A549 (cell line): ENCODE measurements at regions of chr12 and their contacts with region 1.

Region 1: GRCh38 chr12:52147367-52147972 is 44.3 kb downstream of the KRT80 start:
- DNase-seq: peak; percentile 96 to 100
- ATAC-seq: peak; percentile 46 to 71
- H3K4me3 ChIP-seq: no peak overlapping the region
- H3K27ac ChIP-seq: peak overlapping the region; percentile 100
- H3K4me1 ChIP-seq: peaks cover 93% of the 10 kb centered on the region
- CTCF ChIP-seq: no peak
- EP300 ChIP-seq: peak; percentile 97 to 99
- POLR2A ChIP-seq: no peak
- RAD21 ChIP-seq: peak in 1 of 2 experiments; percentile 42; a peak in 3 of 5 replicates

Region 2: DNA sequence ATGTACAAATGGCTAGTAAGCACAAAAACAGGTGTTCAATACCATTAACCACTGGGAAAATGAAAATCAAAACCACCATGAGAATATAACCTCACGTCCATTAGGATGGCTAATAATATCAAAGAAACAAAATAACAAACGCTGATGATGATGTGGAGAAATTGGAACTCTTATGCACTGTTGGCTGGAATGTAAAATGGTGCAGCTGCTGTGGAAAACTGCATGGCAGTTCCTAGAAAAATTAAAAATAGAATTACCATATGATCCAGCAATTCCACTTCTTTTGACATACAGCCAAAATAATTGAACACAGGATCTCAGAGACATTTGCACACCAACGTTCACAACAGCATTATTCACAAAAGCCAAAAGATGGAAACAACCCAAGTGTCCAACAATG is 1253.2 kb before region 1 on chr12:
- CTCF ChIA-PET with region 1: no interaction called
- POLR2A ChIA-PET with region 1: no interaction called
- DNase-seq: no peak
- ATAC-seq: no peak
- H3K4me3 ChIP-seq: no peak overlapping the region
- H3K27ac ChIP-seq: no peak overlapping the region
- H3K4me1 ChIP-seq: no peaks in the 10 kb centered on the region
- CTCF ChIP-seq: no peak
- EP300 ChIP-seq: no peak
- POLR2A ChIP-seq: no peak
- RAD21 ChIP-seq: no peak

Region 3: DNA sequence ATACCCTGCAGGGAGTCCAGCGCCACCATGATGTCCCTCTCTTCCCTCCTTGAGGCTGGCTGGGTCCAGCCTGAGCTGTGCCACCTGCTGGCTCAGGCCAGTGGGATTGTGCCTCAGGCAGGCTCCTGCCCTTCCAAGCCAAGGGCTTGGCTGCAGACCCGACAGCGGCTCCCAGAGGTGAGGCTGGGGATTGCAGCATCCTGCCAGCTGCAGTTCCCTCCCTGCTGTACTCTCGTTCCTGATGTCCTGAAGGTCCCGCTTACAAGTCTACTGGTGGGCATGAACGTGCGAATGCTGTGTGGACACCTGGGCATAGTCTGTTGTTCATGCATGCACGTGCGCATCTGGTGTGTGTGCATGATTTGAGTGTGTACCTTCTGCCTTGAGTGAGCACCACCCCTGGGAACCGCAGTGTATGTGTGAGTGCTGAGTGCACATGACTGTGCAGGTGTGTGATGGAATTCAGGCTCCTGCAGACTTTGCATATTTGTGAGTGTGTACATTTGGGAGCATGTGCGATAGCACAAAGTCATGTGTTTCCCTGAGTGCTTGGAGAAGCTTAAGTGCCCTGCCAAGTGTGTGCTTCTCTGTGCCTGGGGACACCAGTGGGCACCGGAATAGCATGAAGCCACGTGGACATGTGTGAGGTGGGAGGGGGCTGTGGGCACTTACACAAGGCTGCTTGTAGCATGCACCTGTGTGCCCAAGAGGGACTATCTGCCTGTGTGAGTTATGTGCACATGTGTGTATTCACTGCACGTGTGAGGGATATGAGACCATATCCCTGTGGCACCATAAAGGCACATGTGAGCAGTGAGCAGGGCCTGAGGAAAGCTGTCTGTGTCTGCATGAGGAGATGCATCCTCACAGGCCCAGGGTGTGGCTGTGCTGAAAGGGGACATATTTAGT is 66.3 kb after region 1 on chr12:
- CTCF ChIA-PET with region 1: interaction called, 14 read pairs
- POLR2A ChIA-PET with region 1: interaction called, 4 read pairs
- DNase-seq: peak; percentile 88 to 91
- ATAC-seq: peak; percentile 74 to 84
- H3K4me3 ChIP-seq: no peak overlapping the region
- H3K27ac ChIP-seq: peak overlapping the region; percentile 89 to 96
- H3K4me1 ChIP-seq: peaks cover 76% of the 10 kb centered on the region
- CTCF ChIP-seq: peak; percentile 97
- EP300 ChIP-seq: no peak
- POLR2A ChIP-seq: no peak
- RAD21 ChIP-seq: peak; percentile 97 to 98

Region 4: GRCh38 chr12:52243856-52244614 is 96.6 kb after region 1 on chr12:
- CTCF ChIA-PET with region 1: interaction called, 22 read pairs
- POLR2A ChIA-PET with region 1: interaction called, 29 read pairs
- DNase-seq: peak; percentile 92 to 93
- ATAC-seq: peak; percentile 22 to 31
- H3K4me3 ChIP-seq: peak overlapping the region; percentile 24; the same call in 1 of the 3 replicates
- H3K27ac ChIP-seq: peak overlapping the region; percentile 92 to 97
- H3K4me1 ChIP-seq: peaks cover 100% of the 10 kb centered on the region
- CTCF ChIP-seq: no peak
- EP300 ChIP-seq: peak; percentile 55 to 80; a peak in 3 of 5 replicates
- POLR2A ChIP-seq: no peak
- RAD21 ChIP-seq: no peak; a peak in 2 of 5 replicates

Region 5: GRCh38 chr12:52285172-52285745 is 137.8 kb after region 1 on chr12:
- CTCF ChIA-PET with region 1: interaction called, 35 read pairs
- POLR2A ChIA-PET with region 1: interaction called, 75 read pairs
- DNase-seq: peak; percentile 58 to 84
- ATAC-seq: no peak
- H3K4me3 ChIP-seq: peak overlapping the region; percentile 59
- H3K27ac ChIP-seq: peak overlapping the region; percentile 96 to 100
- H3K4me1 ChIP-seq: peaks cover 57% of the 10 kb centered on the region
- CTCF ChIP-seq: no peak
- EP300 ChIP-seq: peak; percentile 90 to 96; a peak in 4 of 5 replicates
- POLR2A ChIP-seq: peak; percentile 80
- RAD21 ChIP-seq: peak in 1 of 2 experiments; percentile 15; a peak in 1 of 5 replicates

Region 6: GRCh38 chr12:52582971-52583456 is 435.5 kb after region 1 on chr12:
- CTCF ChIA-PET with region 1: interaction called, 13 read pairs
- POLR2A ChIA-PET with region 1: no interaction called
- DNase-seq: peak; percentile 74 to 88
- ATAC-seq: peak; percentile 87 to 96
- H3K4me3 ChIP-seq: no peak overlapping the region
- H3K27ac ChIP-seq: peak overlapping the region; percentile 43 to 82
- H3K4me1 ChIP-seq: peaks cover 24% of the 10 kb centered on the region
- CTCF ChIP-seq: peak; percentile 85
- EP300 ChIP-seq: no peak
- POLR2A ChIP-seq: no peak
- RAD21 ChIP-seq: peak; percentile 94 to 97

Region 7: DNA sequence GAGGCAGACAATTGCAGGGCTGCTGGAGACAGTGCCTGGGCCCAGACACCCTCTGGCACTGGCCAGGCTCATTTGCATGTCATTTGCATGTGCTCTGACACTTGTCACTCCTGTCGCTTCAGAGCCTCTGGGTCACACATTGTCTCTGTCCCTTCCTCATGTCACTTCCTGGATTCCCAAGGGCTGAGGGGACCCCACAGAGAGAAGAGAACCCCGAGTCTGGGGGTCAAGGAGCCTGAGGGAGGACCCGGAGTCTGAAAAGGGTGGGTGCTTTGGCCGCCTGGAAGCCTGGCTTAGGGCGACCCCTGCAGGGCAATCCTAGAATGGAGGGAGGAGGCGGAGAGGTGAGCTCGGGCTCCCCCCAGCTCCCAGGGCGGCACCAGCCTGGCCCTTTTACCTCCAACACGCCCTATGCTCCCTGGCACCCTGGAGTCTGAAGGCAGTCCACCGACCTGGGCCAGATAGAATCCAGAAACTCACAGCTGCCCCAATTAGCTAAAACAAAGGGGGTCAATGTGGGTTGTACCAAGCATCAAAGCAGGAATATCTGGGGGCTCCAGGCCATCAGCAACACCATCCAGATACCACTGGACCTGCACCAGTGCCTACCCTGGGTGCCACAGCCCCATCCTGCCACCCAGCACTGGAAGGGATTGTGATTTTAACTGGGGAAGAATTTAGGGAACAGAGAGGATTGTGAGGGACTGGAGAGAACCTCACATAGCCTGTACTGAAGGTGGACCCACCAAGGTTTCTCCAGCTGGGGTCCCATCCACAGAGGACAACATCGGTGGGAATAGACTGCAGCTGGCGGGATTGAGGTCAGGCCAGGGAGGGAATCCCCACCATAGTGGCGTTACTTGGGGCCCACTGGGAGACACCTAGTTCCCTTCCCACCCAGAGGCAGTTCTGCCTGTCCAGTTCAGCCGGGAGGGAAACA is 723.2 kb after region 1 on chr12:
- CTCF ChIA-PET with region 1: interaction called, 833 read pairs
- POLR2A ChIA-PET with region 1: interaction called, 28 read pairs
- DNase-seq: peak; percentile 83 to 86
- ATAC-seq: peak; percentile 33 to 71
- H3K4me3 ChIP-seq: no peak overlapping the region
- H3K27ac ChIP-seq: peak overlapping the region; percentile 94 to 97
- H3K4me1 ChIP-seq: peaks cover 80% of the 10 kb centered on the region
- CTCF ChIP-seq: peak; percentile 96
- EP300 ChIP-seq: no peak
- POLR2A ChIP-seq: no peak
- RAD21 ChIP-seq: peak; percentile 98 to 100